Dorsolateral prefrontal cortex (tissue), 120 donors: ENCODE measurements at regions of chr17 and their contacts with region 1.

Region 1: DNA sequence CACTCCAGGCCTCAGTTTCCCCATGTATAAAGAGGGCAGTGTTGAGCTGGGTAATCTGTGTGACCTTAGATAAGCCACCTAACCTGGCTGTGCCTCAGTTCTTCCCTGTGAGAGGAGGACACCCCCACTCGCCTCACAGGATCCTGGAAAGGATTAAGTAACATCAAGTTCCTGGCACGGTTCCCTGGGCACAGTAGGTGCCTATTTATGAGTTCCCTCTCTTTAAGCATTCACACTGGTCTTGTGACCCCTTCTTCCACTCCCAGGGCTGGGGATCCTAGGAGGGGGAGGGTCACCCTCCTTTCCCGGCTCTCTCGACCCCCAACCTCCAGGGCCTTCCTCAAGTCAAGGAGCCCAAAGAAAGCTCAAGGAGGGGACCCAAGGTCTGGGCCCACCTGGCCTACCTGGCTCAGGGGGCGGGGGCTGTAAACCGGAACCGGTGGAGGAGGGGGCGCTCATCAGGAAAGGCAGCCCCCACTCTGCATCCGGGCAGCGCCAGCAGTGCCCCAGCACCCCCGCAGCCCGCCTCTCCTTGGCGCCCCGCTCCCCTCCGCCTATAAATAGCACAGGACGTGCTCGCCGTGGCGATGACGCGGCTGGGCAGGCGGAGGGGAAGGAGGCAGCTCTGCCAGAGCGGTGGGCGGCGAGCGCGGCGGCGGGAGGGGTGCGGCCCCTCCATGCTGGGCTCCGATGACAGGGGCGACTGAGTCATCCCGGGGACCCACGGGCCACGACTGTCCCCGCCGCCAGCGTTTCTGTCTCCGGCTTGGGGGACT is 9.4 kb downstream of the RPL19 start:
- DNase-seq: peak in 8 of 10 donors; percentile 49 to 92 (median 72)
- H3K4me3 ChIP-seq: peak overlapping the region in 57 of 59 donors; percentile 11 to 65 (median 44)
- H3K27ac ChIP-seq: peak overlapping the region in 58 of 59 donors; percentile 58 to 97 (median 88)
- H3K27me3 ChIP-seq: peaks cover 0 to 12% (median 0%) of the 10 kb centered on the region in 45 donors
- CTCF ChIP-seq: no peak

Region 2: GRCh38 chr17:39177256-39177655 is 32.2 kb before region 1 on chr17:
- intact Hi-C with region 1: no loop called
- DNase-seq: peak in 1 of 10 donors; percentile 43
- H3K4me3 ChIP-seq: no peak overlapping the region
- H3K27ac ChIP-seq: peak overlapping the region in 2 of 59 donors; percentile 9 to 16
- H3K27me3 ChIP-seq: no peaks in the 10 kb centered on the region
- CTCF ChIP-seq: no peak

Region 3: GRCh38 chr17:39225959-39226683 is 16.6 kb after region 1 on chr17:
- intact Hi-C with region 1: loop called in 1 of 2 experiments (anchors 2 kb)
- DNase-seq: peak in 9 of 10 donors; percentile 41 to 91 (median 79)
- H3K4me3 ChIP-seq: peak overlapping the region; percentile 21 to 74 (median 60)
- H3K27ac ChIP-seq: peak overlapping the region in 5 of 59 donors; percentile 5 to 88 (median 60)
- H3K27me3 ChIP-seq: peaks cover 0 to 40% (median 11%) of the 10 kb centered on the region in 45 donors
- CTCF ChIP-seq: no peak

Region 4: DNA sequence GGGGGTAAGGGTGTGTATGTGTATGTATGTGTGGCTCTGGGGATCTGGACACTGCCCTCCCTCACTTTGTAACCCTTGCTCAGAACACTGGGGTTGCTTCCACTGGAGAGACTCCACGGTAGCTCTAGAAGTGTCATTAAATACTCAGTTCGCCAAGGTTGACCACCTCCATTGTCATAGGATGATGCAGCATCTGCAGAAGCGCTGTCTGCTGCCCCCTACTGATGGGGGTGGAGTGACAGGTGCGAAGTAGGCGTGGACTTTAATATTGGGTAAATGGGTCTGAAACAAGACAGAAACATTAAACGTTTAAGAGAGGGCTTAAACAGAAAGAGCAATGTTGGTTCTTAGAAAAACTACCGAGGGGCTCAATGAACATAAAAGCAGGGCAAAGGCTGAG is 51.8 kb after region 1 on chr17:
- intact Hi-C with region 1: no loop called
- DNase-seq: no peak
- H3K4me3 ChIP-seq: no peak overlapping the region
- H3K27ac ChIP-seq: no peak overlapping the region
- H3K27me3 ChIP-seq: no peaks in the 10 kb centered on the region
- CTCF ChIP-seq: peak in 3 of 56 donors; percentile 13 to 26 (median 14)